ENCODE measurements at regions of chr6 and their contacts with region 1.

Region 1: GRCh38 chr6:159789377-159790148 is at the start of gene TCP1:
- DNase-seq: peak; percentile 100
- ATAC-seq: peak; percentile 87
- H3K4me3 ChIP-seq: peak within 1 kb of the TSS; percentile 91 to 94 (median 93)
- H3K27ac ChIP-seq: peak within 1 kb of the TSS; percentile 91
- H3K4me1 ChIP-seq: peaks cover 71% of the 10 kb centered on the region
- H3K27me3 ChIP-seq: no peaks in the 10 kb centered on the region; a peak in 1 of 5 replicates
- CTCF ChIP-seq: peak; percentile 21; the same call in 1 of the 2 replicates
- EP300 ChIP-seq: peak in 1 of 2 experiments; percentile 92; a peak in 3 of 4 replicates
- POLR2A ChIP-seq: peak; percentile 96 to 98
- RAD21 ChIP-seq: peak; percentile 20; the same call in 1 of the 2 replicates
- total RNA-seq, gene TCP1: 553 and 677 TPM in 2 replicates

Region 2: DNA sequence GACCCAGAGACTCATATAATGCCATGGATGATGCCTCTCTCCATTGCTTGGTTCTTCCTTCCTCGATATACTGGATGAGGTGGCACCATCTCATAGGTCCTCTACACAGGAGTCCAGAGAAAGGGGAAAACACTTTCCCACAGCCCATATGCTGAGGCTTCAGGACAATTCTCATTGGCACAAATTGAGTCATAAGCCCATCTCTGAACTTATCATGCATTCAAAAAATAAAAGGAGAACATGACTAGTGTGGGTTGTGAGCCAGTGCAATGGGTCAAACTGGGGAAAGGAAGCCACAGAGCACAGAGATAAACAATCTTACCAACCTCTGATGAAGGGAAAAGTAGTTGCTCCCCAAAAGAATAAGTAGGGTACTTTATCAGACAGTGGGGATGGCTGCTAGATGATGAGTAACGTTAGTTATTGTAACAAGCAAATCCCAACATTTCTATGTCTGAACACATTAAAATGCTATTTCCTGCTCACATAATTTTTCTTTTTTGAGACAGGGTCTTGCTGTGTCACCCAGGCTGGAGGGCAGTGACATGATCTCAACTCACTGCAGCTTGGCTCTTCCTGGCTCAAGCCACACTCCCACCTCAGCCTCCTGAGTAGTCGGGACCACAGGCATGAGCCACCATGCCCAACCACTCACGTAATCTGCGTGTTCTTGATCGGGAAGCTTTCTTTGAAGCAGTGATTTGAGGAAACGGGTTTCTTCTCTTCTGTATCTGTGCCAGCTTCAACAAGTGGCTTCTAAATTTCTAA is 123.5 kb before region 1 on chr6:
- CTCF ChIA-PET with region 1: no interaction called
- POLR2A ChIA-PET with region 1: no interaction called
- in situ Hi-C with region 1: no loop called
- intact Hi-C with region 1: no loop called
- DNase-seq: no peak
- ATAC-seq: no peak
- H3K4me3 ChIP-seq: no peak overlapping the region
- H3K27ac ChIP-seq: no peak overlapping the region
- H3K4me1 ChIP-seq: no peaks in the 10 kb centered on the region
- H3K27me3 ChIP-seq: no peaks in the 10 kb centered on the region
- CTCF ChIP-seq: no peak
- EP300 ChIP-seq: no peak
- POLR2A ChIP-seq: no peak
- RAD21 ChIP-seq: no peak

Region 3: GRCh38 chr6:159693128-159693893 is 96.3 kb before region 1 on chr6 and contains the start of gene SOD2:
- CTCF ChIA-PET with region 1: no interaction called
- POLR2A ChIA-PET with region 1: interaction called, 69 read pairs
- in situ Hi-C with region 1: loop called (anchors 5 kb)
- intact Hi-C with region 1: loop called (anchors 1 kb)
- DNase-seq: peak; percentile 89
- ATAC-seq: peak; percentile 82
- H3K4me3 ChIP-seq: peak within 1 kb of the TSS; percentile 75 to 97 (median 90)
- H3K27ac ChIP-seq: peak within 1 kb of the TSS; percentile 94
- H3K4me1 ChIP-seq: peaks cover 52% of the 10 kb centered on the region
- H3K27me3 ChIP-seq: no peaks in the 10 kb centered on the region; a peak in 1 of 5 replicates
- CTCF ChIP-seq: peak; percentile 25; the same call in 1 of the 2 replicates
- EP300 ChIP-seq: peak; percentile 23 to 37; a peak in 2 of 4 replicates
- POLR2A ChIP-seq: peak; percentile 94 to 96
- RAD21 ChIP-seq: peak; percentile 74
- total RNA-seq, gene SOD2: 304 and 480 TPM in 2 replicates

Region 4: DNA sequence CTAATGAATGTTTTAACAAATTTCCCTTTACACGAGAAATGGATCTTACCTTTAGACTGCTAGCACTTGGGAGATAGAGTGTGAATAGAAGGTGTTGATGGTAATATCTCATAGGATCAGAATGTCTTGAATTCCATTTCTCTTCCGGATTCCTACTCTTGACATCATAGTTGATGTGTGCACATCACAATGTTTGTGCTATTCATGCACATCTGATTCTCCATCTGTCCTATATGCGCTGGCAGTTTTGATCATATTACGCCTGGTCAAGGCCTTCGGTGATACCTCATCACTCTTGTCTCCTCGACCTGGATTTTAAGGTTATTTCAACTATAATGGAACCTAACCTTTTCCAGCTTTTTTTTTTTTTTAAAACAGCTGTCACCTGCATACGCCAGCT is 44.5 kb before region 1 on chr6:
- CTCF ChIA-PET with region 1: no interaction called
- POLR2A ChIA-PET with region 1: no interaction called
- in situ Hi-C with region 1: no loop called
- intact Hi-C with region 1: no loop called
- DNase-seq: no peak
- ATAC-seq: no peak
- H3K4me3 ChIP-seq: no peak overlapping the region
- H3K27ac ChIP-seq: no peak overlapping the region
- H3K4me1 ChIP-seq: no peaks in the 10 kb centered on the region
- H3K27me3 ChIP-seq: no peaks in the 10 kb centered on the region
- CTCF ChIP-seq: no peak
- EP300 ChIP-seq: no peak
- POLR2A ChIP-seq: no peak
- RAD21 ChIP-seq: no peak

Region 5: GRCh38 chr6:159761873-159762680 is 27.5 kb before region 1 on chr6 and contains the start of gene ACAT2:
- CTCF ChIA-PET with region 1: no interaction called
- POLR2A ChIA-PET with region 1: interaction called, 142 read pairs
- in situ Hi-C with region 1: no loop called
- intact Hi-C with region 1: loop called (anchors 1 kb)
- DNase-seq: peak; percentile 97
- ATAC-seq: peak; percentile 94
- H3K4me3 ChIP-seq: peak within 1 kb of the TSS; percentile 83 to 97 (median 88)
- H3K27ac ChIP-seq: peak within 1 kb of the TSS; percentile 97
- H3K4me1 ChIP-seq: peaks cover 80% of the 10 kb centered on the region
- H3K27me3 ChIP-seq: no peaks in the 10 kb centered on the region; a peak in 1 of 5 replicates
- CTCF ChIP-seq: peak; percentile 12; the same call in 1 of the 2 replicates
- EP300 ChIP-seq: peak in 1 of 2 experiments; percentile 31; a peak in 2 of 4 replicates
- POLR2A ChIP-seq: peak; percentile 91 to 95
- RAD21 ChIP-seq: peak; percentile 60
- total RNA-seq, gene ACAT2: 534 and 775 TPM in 2 replicates

Region 6: DNA sequence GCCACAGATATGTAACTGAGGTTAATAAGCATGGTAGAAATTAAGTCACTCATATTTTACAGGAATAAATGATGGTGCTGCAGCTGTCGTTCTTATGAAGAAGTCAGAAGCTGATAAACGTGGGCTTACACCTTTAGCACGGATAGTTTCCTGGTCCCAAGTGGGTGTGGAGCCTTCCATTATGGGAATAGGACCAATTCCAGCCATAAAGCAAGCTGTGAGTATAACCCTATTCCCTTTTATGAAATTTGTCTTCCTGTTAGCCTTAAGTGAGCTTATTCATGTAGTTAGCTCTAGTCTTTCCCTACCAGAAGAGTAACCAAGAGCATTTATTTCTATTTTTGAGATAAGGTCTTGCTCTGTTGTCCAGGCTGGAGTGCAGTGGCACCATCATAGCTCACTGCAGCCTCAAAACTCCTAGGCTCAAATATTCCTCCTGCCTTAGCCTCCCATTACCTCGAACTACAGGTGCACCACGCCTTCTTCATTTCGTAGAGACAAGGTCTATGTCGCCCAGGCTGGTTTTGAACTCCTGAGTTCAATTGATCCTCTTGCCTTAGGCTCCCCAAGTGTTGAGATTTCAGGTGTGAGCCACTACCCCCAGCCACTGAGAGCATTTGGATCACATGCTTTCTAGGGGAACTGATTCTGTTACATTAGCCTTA is 12.2 kb before region 1 on chr6:
- CTCF ChIA-PET with region 1: no interaction called
- POLR2A ChIA-PET with region 1: interaction called, 29 read pairs
- in situ Hi-C with region 1: no loop called
- intact Hi-C with region 1: no loop called
- DNase-seq: no peak
- ATAC-seq: no peak; the same call in 2 of the 3 replicates
- H3K4me3 ChIP-seq: no peak overlapping the region
- H3K27ac ChIP-seq: no peak overlapping the region
- H3K4me1 ChIP-seq: peaks cover 10% of the 10 kb centered on the region; the same call in 1 of the 2 replicates
- H3K27me3 ChIP-seq: no peaks in the 10 kb centered on the region
- CTCF ChIP-seq: no peak
- EP300 ChIP-seq: no peak
- POLR2A ChIP-seq: peak; percentile 27 to 52; a peak in 3 of 4 replicates
- RAD21 ChIP-seq: no peak

Region 7: GRCh38 chr6:159821122-159821521 is 31.6 kb after region 1 on chr6:
- CTCF ChIA-PET with region 1: no interaction called
- POLR2A ChIA-PET with region 1: interaction called, 14 read pairs
- in situ Hi-C with region 1: no loop called
- intact Hi-C with region 1: no loop called
- DNase-seq: no peak
- ATAC-seq: no peak
- H3K4me3 ChIP-seq: no peak overlapping the region
- H3K27ac ChIP-seq: no peak overlapping the region
- H3K4me1 ChIP-seq: peaks cover 26% of the 10 kb centered on the region
- H3K27me3 ChIP-seq: peaks cover 16 to 74% of the 10 kb centered on the region in 2 experiments
- CTCF ChIP-seq: no peak
- EP300 ChIP-seq: no peak
- POLR2A ChIP-seq: no peak
- RAD21 ChIP-seq: no peak

Measured in HepG2 (cell line).